H1 (cell line): ENCODE measurements at regions of chr9 and their contacts with region 1.

Region 1: GRCh38 chr9:35042081-35042604 is 30.3 kb downstream of the VCP start:
- DNase-seq: no peak
- H3K4me3 ChIP-seq: no peak overlapping the region
- H3K27ac ChIP-seq: no peak overlapping the region
- H3K4me1 ChIP-seq: peaks cover 0 to 2% (median 0%) of the 10 kb centered on the region in 4 experiments; a peak in 2 of 7 replicates
- H3K27me3 ChIP-seq: no peaks in the 10 kb centered on the region
- CTCF ChIP-seq: no peak
- EP300 ChIP-seq: no peak
- POLR2A ChIP-seq: no peak
- RAD21 ChIP-seq: no peak

Region 2: GRCh38 chr9:34876096-34876495 is 166.0 kb before region 1 on chr9:
- CTCF ChIA-PET with region 1: no interaction called
- POLR2A ChIA-PET with region 1: no interaction called
- DNase-seq: no peak
- H3K4me3 ChIP-seq: no peak overlapping the region
- H3K27ac ChIP-seq: no peak overlapping the region
- H3K4me1 ChIP-seq: no peaks in the 10 kb centered on the region
- H3K27me3 ChIP-seq: no peaks in the 10 kb centered on the region
- CTCF ChIP-seq: no peak
- EP300 ChIP-seq: no peak
- POLR2A ChIP-seq: no peak
- RAD21 ChIP-seq: no peak

Region 3: GRCh38 chr9:35026671-35027070 is 15.5 kb before region 1 on chr9:
- CTCF ChIA-PET with region 1: interaction called, 14 read pairs
- POLR2A ChIA-PET with region 1: interaction called, 5 read pairs
- DNase-seq: no peak
- H3K4me3 ChIP-seq: no peak overlapping the region
- H3K27ac ChIP-seq: peak overlapping the region; percentile 44; the same call in 1 of the 2 replicates
- H3K4me1 ChIP-seq: peaks cover 0 to 10% (median 3%) of the 10 kb centered on the region in 4 experiments; a peak in 3 of 7 replicates
- H3K27me3 ChIP-seq: no peaks in the 10 kb centered on the region
- CTCF ChIP-seq: no peak
- EP300 ChIP-seq: no peak
- POLR2A ChIP-seq: no peak
- RAD21 ChIP-seq: no peak

Region 4: GRCh38 chr9:35114840-35115628 is 72.9 kb after region 1 on chr9:
- CTCF ChIA-PET with region 1: no interaction called
- POLR2A ChIA-PET with region 1: no interaction called
- DNase-seq: peak in 1 of 2 experiments; percentile 54
- H3K4me3 ChIP-seq: peak overlapping the region; percentile 49 to 83 (median 76)
- H3K27ac ChIP-seq: peak overlapping the region; percentile 76
- H3K4me1 ChIP-seq: peaks cover 4 to 25% (median 11%) of the 10 kb centered on the region in 4 experiments; a peak in 6 of 7 replicates
- H3K27me3 ChIP-seq: no peaks in the 10 kb centered on the region
- CTCF ChIP-seq: no peak
- EP300 ChIP-seq: no peak
- POLR2A ChIP-seq: no peak
- RAD21 ChIP-seq: no peak

Region 5: GRCh38 chr9:35161713-35162604 is 119.8 kb after region 1 on chr9 and contains the start of gene UNC13B:
- CTCF ChIA-PET with region 1: no interaction called
- POLR2A ChIA-PET with region 1: no interaction called
- DNase-seq: peak; percentile 84 to 97
- H3K4me3 ChIP-seq: peak within 1 kb of the TSS; percentile 54 to 88 (median 84)
- H3K27ac ChIP-seq: peak within 1 kb of the TSS; percentile 69; the same call in 1 of the 2 replicates
- H3K4me1 ChIP-seq: peaks cover 0 to 3% (median 0%) of the 10 kb centered on the region in 4 experiments; a peak in 3 of 7 replicates
- H3K27me3 ChIP-seq: no peaks in the 10 kb centered on the region
- CTCF ChIP-seq: peak in 2 of 3 experiments; percentile 7 to 8; a peak in 2 of 4 replicates
- EP300 ChIP-seq: no peak
- POLR2A ChIP-seq: peak; percentile 64 to 73
- RAD21 ChIP-seq: no peak; a peak in 1 of 4 replicates
- total RNA-seq, gene UNC13B: 46.5 and 51.7 TPM in 2 replicates